Ovary (tissue), 10 donors: ENCODE measurements at regions of chr10 and their contacts with region 1.

Region 1: GRCh38 chr10:72834183-72834825 is 59.2 kb upstream of the OIT3 start:
- DNase-seq: peak in 4 of 5 donors; percentile 30 to 55 (median 47)
- H3K4me3 ChIP-seq: no peak overlapping the region
- H3K27ac ChIP-seq: no peak overlapping the region
- H3K4me1 ChIP-seq: no peaks in the 10 kb centered on the region
- H3K27me3 ChIP-seq: no peaks in the 10 kb centered on the region
- CTCF ChIP-seq: peak; percentile 55 to 76 (median 74)
- EP300 ChIP-seq: no peak
- POLR2A ChIP-seq: no peak

Region 2: DNA sequence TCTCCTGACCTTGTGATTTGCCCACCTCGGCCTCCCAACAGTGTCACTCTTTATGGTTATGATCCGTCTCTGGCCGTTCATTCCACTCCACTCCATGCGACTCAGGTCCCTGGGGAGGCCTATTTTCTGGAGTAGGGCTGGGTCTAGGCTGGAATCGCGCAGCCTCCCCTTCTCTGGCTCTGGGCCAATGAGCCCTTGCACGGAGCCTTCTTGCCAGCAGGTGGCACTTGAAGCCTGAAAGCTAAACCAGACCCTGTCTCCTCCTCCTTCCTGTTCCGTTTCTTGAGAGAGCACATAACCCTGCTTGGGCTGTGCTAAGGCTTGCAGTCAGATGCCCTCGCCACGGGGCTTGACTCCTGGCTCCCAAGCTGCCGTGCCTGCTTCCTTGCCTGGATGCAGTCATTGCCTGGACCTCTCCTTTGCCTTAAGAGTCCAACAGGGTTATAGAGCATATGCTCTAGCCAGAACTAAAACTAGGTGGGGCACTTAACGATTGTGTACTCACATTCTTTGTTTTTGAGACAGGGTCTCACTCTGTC is 470.0 kb before region 1 on chr10:
- intact Hi-C with region 1: loop called in 3 of 4 experiments (anchors 2 to 5 kb)
- DNase-seq: peak; percentile 86 to 93 (median 91)
- H3K4me3 ChIP-seq: no peak overlapping the region
- H3K27ac ChIP-seq: peak overlapping the region in 1 of 2 donors; percentile 34
- H3K4me1 ChIP-seq: no peaks in the 10 kb centered on the region
- H3K27me3 ChIP-seq: no peaks in the 10 kb centered on the region
- CTCF ChIP-seq: peak; percentile 84 to 97 (median 93)
- EP300 ChIP-seq: no peak
- POLR2A ChIP-seq: peak; percentile 16

Region 3: GRCh38 chr10:72370201-72370722 is 464.0 kb before region 1 on chr10:
- intact Hi-C with region 1: loop called in 3 of 4 experiments (anchors 2 to 5 kb)
- DNase-seq: no peak
- H3K4me3 ChIP-seq: no peak overlapping the region
- H3K27ac ChIP-seq: no peak overlapping the region
- H3K4me1 ChIP-seq: no peaks in the 10 kb centered on the region
- H3K27me3 ChIP-seq: no peaks in the 10 kb centered on the region
- CTCF ChIP-seq: no peak
- EP300 ChIP-seq: no peak
- POLR2A ChIP-seq: no peak

Region 4: DNA sequence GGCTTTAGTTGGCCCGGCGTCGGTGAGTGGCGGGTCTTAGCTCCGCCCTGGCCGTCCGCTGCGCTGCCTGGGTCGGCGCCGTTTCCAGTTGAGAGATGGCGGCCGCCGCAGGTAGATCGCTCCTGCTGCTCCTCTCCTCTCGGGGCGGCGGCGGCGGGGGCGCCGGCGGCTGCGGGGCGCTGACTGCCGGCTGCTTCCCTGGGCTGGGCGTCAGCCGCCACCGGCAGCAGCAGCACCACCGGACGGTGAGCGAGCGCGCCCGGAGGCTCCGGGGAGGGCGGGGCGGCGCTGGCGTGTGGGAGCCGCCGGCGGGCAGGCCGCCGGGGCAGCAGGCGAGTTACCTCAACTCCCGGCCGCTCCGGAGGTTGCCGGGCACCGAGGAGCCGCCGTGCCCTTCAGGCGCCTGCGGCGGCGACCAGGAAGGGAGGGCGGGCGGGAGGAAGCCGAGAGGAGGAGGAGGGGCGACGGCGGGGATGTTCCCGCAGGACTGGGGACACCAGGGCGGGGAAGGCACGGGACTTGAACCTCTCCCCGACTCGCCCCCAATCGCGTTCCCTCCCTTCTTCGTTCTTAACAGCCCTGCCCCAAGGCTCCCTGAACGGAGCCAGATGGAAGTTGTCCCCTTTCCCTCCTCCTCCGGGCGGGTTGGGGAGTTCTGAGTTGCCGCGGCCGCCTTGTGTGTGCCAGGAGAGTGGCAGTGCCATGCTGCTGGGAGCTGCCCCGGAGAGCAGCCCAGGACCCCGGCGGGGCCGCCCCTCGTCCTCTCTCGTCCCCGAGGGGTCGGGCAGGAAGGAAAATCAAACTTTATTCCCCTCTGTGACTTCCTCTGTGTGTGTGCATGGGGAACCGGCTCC is 142.0 kb before region 1 on chr10 and contains the start of gene MCU:
- intact Hi-C with region 1: loop called in 2 of 4 experiments (anchors 10 kb)
- DNase-seq: peak; percentile 94 to 97 (median 95)
- H3K4me3 ChIP-seq: peak within 1 kb of the TSS; percentile 84
- H3K27ac ChIP-seq: peak within 1 kb of the TSS; percentile 89
- H3K4me1 ChIP-seq: peaks cover 2% of the 10 kb centered on the region
- H3K27me3 ChIP-seq: no peaks in the 10 kb centered on the region
- CTCF ChIP-seq: peak in 1 of 3 donors; percentile 10
- EP300 ChIP-seq: no peak
- POLR2A ChIP-seq: peak; percentile 64
- total RNA-seq, gene MCU: 10.9 to 17.8 (median 12.8) TPM

Region 5: DNA sequence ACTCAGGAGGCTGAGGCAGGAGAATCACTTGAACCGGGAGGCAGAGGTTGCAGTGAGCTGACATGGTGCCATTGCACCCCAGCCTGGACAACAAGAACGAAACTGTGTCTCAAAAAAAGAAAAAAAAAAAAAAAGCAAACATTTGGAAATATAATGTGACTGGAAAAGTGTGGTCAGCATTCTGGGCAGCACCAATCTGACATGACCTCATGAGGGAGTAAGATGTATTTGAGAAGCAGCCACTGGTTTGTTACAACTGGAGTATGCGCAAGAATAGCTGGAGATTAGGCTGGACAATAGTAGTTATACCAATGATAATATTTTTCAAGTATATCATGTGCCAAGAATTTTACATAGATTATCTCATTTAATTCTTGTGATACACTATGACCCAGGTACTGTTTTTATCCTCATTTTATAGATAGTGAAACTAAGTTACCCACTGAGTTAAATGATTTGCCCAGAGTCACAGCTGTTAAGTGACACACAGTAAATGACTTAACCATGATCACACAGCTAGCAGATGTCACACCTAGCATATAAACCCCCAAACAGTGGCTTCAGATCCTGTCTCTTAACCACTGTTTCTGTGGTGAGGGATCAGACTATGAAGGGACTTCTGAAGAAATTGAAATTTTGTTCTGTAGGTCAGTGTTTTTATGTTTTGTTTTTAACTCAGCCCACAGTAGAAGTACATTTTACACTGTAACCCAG is 131.3 kb before region 1 on chr10:
- intact Hi-C with region 1: loop called (anchors 10 kb)
- DNase-seq: no peak
- H3K4me3 ChIP-seq: no peak overlapping the region
- H3K27ac ChIP-seq: no peak overlapping the region
- H3K4me1 ChIP-seq: no peaks in the 10 kb centered on the region
- H3K27me3 ChIP-seq: no peaks in the 10 kb centered on the region
- CTCF ChIP-seq: no peak
- EP300 ChIP-seq: no peak
- POLR2A ChIP-seq: no peak